Mammary epithelial cell (primary cell): ENCODE measurements at regions of chr9 and their contacts with region 1.

Region 1: DNA sequence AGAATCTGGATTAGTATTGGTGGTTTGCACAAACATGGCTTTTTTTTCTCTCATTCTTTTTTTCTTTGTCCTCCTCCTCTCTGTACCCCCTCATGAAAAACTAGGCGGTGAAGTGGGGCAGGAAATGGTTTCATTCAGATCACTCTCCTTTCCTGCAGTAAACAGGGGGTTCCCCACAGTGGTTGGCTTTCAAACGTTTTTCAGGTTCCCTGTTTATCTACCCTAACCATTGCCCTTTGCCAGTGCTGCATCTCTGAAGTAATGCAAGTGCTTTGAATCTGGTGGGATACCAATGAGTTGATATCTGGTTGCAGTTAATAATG is 29.8 kb downstream of the NR4A3 start:
- DNase-seq: no peak
- H3K4me3 ChIP-seq: no peak overlapping the region
- H3K27ac ChIP-seq: no peak overlapping the region
- H3K4me1 ChIP-seq: no peaks in the 10 kb centered on the region
- H3K27me3 ChIP-seq: no peaks in the 10 kb centered on the region
- CTCF ChIP-seq: no peak

Region 2: GRCh38 chr9:99307851-99308250 is 543.6 kb before region 1 on chr9:
- CTCF ChIA-PET with region 1: no interaction called
- dilution Hi-C with region 1: no loop called
- in situ Hi-C with region 1: no loop called
- intact Hi-C with region 1: no loop called
- DNase-seq: no peak
- H3K4me3 ChIP-seq: no peak overlapping the region
- H3K27ac ChIP-seq: no peak overlapping the region
- H3K4me1 ChIP-seq: no peaks in the 10 kb centered on the region
- H3K27me3 ChIP-seq: no peaks in the 10 kb centered on the region
- CTCF ChIP-seq: no peak

Region 3: DNA sequence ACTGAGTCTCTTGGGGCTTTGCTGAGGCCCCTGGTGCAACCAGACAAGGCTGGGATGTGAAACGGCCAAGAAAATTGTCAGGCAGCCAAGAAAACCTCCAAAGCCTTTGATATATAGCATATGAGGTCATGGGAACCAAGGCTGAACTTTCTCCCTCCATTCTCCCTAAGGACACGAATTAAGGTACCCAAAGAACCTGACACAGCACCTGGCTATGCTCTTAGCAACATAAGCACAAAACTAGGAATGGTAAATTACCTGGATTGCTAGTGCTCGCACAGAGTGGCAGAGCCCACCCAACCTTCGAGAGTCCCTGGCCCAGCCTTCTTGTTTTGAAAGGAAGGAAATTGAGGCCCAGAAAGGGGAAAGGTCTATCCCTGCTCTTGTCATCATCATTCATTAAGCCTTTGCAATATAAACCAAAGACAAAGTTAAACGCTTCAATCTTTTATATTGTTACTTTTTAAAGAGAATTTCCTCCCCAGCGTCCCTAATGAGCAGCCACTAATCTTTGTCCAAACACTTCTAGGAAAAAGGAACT is 249.8 kb before region 1 on chr9:
- CTCF ChIA-PET with region 1: no interaction called
- dilution Hi-C with region 1: no loop called
- in situ Hi-C with region 1: no loop called
- intact Hi-C with region 1: no loop called
- DNase-seq: no peak
- H3K4me3 ChIP-seq: no peak overlapping the region
- H3K27ac ChIP-seq: no peak overlapping the region
- H3K4me1 ChIP-seq: no peaks in the 10 kb centered on the region
- H3K27me3 ChIP-seq: no peaks in the 10 kb centered on the region
- CTCF ChIP-seq: no peak

Region 4: DNA sequence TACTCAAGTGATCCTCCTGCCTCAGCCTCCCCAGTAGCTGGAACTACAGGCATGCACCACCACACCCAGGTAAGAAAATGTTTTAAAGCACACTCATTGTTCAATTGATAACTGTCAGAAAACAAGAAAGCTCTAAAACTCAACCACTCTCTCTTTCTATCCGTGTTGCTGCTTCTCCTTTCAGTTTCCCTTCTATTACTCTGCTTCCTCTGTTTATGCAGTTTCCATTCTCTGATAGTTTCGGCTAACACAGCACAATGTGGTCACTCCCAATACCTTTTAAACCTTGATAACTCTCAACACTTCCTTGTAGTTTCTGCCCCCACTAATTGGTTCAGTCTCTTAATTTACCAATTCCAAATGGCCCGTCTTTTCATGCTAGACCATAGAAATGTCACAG is 89.0 kb before region 1 on chr9:
- CTCF ChIA-PET with region 1: no interaction called
- dilution Hi-C with region 1: loop called (anchors 25 kb)
- in situ Hi-C with region 1: no loop called
- intact Hi-C with region 1: no loop called
- DNase-seq: no peak
- H3K4me3 ChIP-seq: no peak overlapping the region
- H3K27ac ChIP-seq: no peak overlapping the region
- H3K4me1 ChIP-seq: no peaks in the 10 kb centered on the region
- H3K27me3 ChIP-seq: no peaks in the 10 kb centered on the region
- CTCF ChIP-seq: no peak

Region 5: GRCh38 chr9:100186356-100186755 is 334.9 kb after region 1 on chr9:
- CTCF ChIA-PET with region 1: no interaction called
- dilution Hi-C with region 1: no loop called
- in situ Hi-C with region 1: no loop called
- intact Hi-C with region 1: no loop called
- DNase-seq: no peak
- H3K4me3 ChIP-seq: no peak overlapping the region
- H3K27ac ChIP-seq: no peak overlapping the region
- H3K4me1 ChIP-seq: no peaks in the 10 kb centered on the region
- H3K27me3 ChIP-seq: no peaks in the 10 kb centered on the region
- CTCF ChIP-seq: no peak

Region 6: DNA sequence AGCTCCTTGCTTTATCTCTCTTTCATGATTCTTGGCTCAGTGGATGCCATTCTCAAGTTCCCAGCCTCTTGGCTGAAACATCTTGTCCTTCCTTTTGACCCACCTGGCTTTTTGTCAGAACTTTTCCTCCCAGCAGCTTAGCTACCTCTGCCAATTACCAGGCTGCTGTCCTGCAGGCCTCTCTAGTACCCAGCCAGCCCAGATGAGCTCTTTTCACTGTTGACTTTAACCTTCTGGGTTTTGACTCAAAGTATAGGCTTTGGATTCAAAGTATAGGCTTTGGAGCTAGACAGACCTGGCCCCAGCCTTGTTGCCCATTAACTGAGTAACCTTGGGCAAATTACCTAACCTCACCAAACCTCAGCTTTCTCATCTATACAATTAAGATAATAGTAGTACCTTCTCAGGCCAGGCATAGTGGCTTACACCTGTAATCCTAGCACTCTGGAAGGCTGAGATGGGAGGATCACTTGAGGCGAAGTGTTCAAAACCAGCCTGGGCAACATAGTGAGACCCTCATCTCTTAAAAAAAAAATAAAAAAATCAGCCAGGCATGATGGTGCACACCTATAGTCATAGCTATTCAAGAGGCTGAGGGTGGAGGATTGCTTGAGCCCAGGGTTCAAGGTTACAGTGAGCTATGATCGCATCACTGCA is 614.8 kb after region 1 on chr9:
- CTCF ChIA-PET with region 1: no interaction called
- dilution Hi-C with region 1: no loop called
- in situ Hi-C with region 1: no loop called
- intact Hi-C with region 1: no loop called
- DNase-seq: no peak
- H3K4me3 ChIP-seq: no peak overlapping the region
- H3K27ac ChIP-seq: no peak overlapping the region
- H3K4me1 ChIP-seq: no peaks in the 10 kb centered on the region
- H3K27me3 ChIP-seq: no peaks in the 10 kb centered on the region
- CTCF ChIP-seq: no peak